Heart left ventricle (tissue), 16 donors: ENCODE measurements at regions of chr15 and their contacts with region 1.

Region 1: GRCh38 chr15:78241007-78241406 is 6.6 kb upstream of the ACSBG1 start:
- DNase-seq: peak; percentile 81 to 91 (median 85)
- ATAC-seq: peak; percentile 92 to 95 (median 94)
- H3K4me3 ChIP-seq: no peak overlapping the region
- H3K27ac ChIP-seq: no peak overlapping the region
- H3K4me1 ChIP-seq: peaks cover 0 to 14% (median 3%) of the 10 kb centered on the region in 12 donors
- H3K27me3 ChIP-seq: no peaks in the 10 kb centered on the region
- CTCF ChIP-seq: peak; percentile 81 to 93 (median 88)
- POLR2A ChIP-seq: no peak

Region 2: DNA sequence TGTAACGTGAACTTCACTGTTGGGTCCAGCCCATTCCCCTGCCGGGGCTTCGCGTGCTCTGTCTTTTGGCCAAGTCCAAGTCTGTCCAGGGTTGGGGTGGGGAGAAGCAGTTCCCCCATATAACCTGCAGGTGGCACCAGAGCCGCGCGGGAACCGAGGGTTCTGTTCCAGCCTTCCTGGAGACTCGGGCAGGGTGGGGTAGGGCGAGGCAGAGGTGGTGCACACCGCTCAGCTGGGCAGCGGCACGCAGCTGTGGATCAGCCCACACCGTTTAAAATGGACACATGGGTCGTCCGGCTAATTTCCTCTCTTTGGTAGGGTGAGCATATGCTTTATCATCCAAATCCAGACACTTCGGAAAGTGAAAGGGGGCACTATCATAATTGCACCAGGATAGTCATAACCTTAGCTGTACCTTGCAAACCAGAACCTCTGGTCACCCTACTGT is 281.6 kb before region 1 on chr15:
- intact Hi-C with region 1: loop called (anchors 2 to 5 kb)
- DNase-seq: peak; percentile 75 to 92 (median 77)
- ATAC-seq: peak; percentile 81 to 99 (median 98)
- H3K4me3 ChIP-seq: peak overlapping the region in 5 of 12 donors; percentile 20 to 39 (median 35)
- H3K27ac ChIP-seq: no peak overlapping the region
- H3K4me1 ChIP-seq: peaks cover 0 to 6% (median 1%) of the 10 kb centered on the region in 12 donors
- H3K27me3 ChIP-seq: no peaks in the 10 kb centered on the region
- CTCF ChIP-seq: peak; percentile 91 to 98 (median 96)
- POLR2A ChIP-seq: no peak

Region 3: GRCh38 chr15:78108299-78109084 is 132.5 kb before region 1 on chr15:
- intact Hi-C with region 1: loop called in 7 of 10 experiments (anchors 1 to 2 kb)
- DNase-seq: peak; percentile 82 to 93 (median 86)
- ATAC-seq: peak; percentile 65 to 90 (median 89)
- H3K4me3 ChIP-seq: no peak overlapping the region
- H3K27ac ChIP-seq: no peak overlapping the region
- H3K4me1 ChIP-seq: peaks cover 0 to 28% (median 0%) of the 10 kb centered on the region in 12 donors
- H3K27me3 ChIP-seq: no peaks in the 10 kb centered on the region
- CTCF ChIP-seq: peak; percentile 90 to 98 (median 93)
- POLR2A ChIP-seq: no peak

Region 4: GRCh38 chr15:78177447-78177873 is 63.5 kb before region 1 on chr15:
- intact Hi-C with region 1: loop called (anchors 1 to 5 kb)
- DNase-seq: peak in 3 of 5 donors; percentile 43 to 53 (median 43)
- ATAC-seq: peak in 3 of 4 donors; percentile 37 to 53 (median 51)
- H3K4me3 ChIP-seq: no peak overlapping the region
- H3K27ac ChIP-seq: no peak overlapping the region
- H3K4me1 ChIP-seq: peaks cover 0 to 7% (median 0%) of the 10 kb centered on the region in 12 donors
- H3K27me3 ChIP-seq: no peaks in the 10 kb centered on the region
- CTCF ChIP-seq: peak; percentile 41 to 72 (median 62)
- POLR2A ChIP-seq: no peak

Region 5: GRCh38 chr15:78201281-78202190 is 39.5 kb before region 1 on chr15:
- intact Hi-C with region 1: loop called in 5 of 10 experiments (anchors 2 to 5 kb)
- DNase-seq: no peak
- ATAC-seq: no peak
- H3K4me3 ChIP-seq: no peak overlapping the region
- H3K27ac ChIP-seq: no peak overlapping the region
- H3K4me1 ChIP-seq: peaks cover 0 to 41% (median 20%) of the 10 kb centered on the region in 12 donors
- H3K27me3 ChIP-seq: no peaks in the 10 kb centered on the region
- CTCF ChIP-seq: no peak
- POLR2A ChIP-seq: no peak

Region 6: DNA sequence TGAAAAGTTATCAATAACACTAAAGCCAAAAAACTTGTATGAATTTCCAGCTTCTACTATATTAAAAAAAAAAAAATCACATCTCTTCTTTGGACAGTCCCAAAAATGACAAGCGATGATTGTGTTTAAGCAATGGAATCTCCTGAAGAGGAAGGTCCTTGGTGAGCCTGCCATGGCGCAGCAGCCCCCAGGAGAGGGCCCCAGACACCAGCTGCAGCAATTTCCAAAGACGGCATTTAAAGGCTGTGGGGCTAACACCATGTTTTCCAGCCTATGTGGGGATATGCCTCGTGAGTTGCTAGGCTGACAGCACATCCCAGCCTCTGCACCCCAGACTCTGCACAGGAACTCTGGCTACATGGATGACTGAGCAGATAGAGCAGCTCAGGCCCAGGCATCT is 43.8 kb after region 1 on chr15:
- intact Hi-C with region 1: no loop called
- DNase-seq: no peak
- ATAC-seq: no peak
- H3K4me3 ChIP-seq: no peak overlapping the region
- H3K27ac ChIP-seq: no peak overlapping the region
- H3K4me1 ChIP-seq: peaks cover 0 to 7% (median 0%) of the 10 kb centered on the region in 12 donors
- H3K27me3 ChIP-seq: no peaks in the 10 kb centered on the region
- CTCF ChIP-seq: no peak
- POLR2A ChIP-seq: no peak